ENCODE measurements at regions of chr17 and their contacts with region 1.

Region 1: GRCh38 chr17:19648475-19649406 is at the start of gene ALDH3A2:
- DNase-seq: peak; percentile 100
- H3K4me3 ChIP-seq: peak within 1 kb of the TSS; percentile 56 to 71 (median 71)
- H3K27ac ChIP-seq: peak within 1 kb of the TSS; percentile 96 to 98 (median 97)
- H3K4me1 ChIP-seq: peaks cover 49 to 59% of the 10 kb centered on the region in 2 donors
- H3K27me3 ChIP-seq: no peaks in the 10 kb centered on the region
- CTCF ChIP-seq: peak in 3 of 6 experiments; percentile 21 to 41 (median 34)
- POLR2A ChIP-seq: peak; percentile 66 to 97
- total RNA-seq, gene ALDH3A2: 198 to 566 (median 366) TPM

Region 2: GRCh38 chr17:19513897-19514488 is 134.7 kb before region 1 on chr17:
- intact Hi-C with region 1: loop called (anchors 10 kb)
- DNase-seq: peak; percentile 68 to 74
- H3K4me3 ChIP-seq: no peak overlapping the region
- H3K27ac ChIP-seq: no peak overlapping the region
- H3K4me1 ChIP-seq: no peaks in the 10 kb centered on the region
- H3K27me3 ChIP-seq: no peaks in the 10 kb centered on the region
- CTCF ChIP-seq: peak; percentile 68 to 94 (median 88)
- POLR2A ChIP-seq: no peak

Region 3: DNA sequence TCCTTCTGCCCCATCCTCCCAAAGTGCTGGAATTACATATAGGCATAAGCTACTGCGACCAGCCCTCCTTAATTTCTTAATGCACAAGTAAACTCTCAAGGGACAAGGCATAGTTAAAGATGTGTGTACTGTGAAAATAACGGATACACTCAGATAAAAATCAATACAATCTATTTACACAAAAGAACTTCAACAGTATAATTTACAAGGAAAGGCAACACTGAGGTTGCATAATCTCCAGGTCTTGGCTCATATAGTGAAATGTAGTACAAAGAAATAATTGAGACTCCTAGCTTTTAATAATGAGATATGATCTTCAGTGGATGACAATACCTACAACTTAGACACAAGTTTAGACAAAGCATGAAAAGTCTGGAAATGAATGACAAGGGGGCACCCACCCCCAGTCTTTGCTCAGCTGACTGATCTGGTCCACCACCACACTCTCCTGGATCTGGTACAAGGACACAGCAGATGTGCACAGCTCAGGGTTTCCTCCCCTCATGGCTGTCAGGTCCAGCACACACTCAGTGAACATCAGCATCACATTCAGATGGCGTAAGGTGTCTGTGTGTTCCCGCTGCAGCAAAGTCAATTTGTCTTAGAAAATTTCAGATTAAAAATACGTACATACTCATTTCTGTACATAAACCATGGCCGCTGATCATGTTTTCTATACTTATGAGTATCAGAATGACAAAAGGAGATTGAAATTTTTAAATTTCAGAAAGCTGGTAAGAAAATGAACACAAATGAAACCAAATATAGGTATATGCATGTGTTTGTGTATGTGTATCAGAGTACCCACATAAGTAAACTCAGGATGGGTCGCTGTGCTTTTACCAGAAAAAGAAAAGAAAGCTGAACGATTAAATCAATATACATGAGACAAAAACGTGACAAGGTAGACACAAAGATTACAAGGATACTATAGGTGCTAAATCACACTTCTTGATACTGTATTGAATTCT is 133.0 kb after region 1 on chr17:
- intact Hi-C with region 1: no loop called
- DNase-seq: no peak
- H3K4me3 ChIP-seq: no peak overlapping the region
- H3K27ac ChIP-seq: no peak overlapping the region
- H3K4me1 ChIP-seq: no peaks in the 10 kb centered on the region
- H3K27me3 ChIP-seq: no peaks in the 10 kb centered on the region
- CTCF ChIP-seq: no peak
- POLR2A ChIP-seq: no peak